Left colon (tissue), 2 donors: ENCODE measurements at regions of chr1 and their contacts with region 1.

Region 1: DNA sequence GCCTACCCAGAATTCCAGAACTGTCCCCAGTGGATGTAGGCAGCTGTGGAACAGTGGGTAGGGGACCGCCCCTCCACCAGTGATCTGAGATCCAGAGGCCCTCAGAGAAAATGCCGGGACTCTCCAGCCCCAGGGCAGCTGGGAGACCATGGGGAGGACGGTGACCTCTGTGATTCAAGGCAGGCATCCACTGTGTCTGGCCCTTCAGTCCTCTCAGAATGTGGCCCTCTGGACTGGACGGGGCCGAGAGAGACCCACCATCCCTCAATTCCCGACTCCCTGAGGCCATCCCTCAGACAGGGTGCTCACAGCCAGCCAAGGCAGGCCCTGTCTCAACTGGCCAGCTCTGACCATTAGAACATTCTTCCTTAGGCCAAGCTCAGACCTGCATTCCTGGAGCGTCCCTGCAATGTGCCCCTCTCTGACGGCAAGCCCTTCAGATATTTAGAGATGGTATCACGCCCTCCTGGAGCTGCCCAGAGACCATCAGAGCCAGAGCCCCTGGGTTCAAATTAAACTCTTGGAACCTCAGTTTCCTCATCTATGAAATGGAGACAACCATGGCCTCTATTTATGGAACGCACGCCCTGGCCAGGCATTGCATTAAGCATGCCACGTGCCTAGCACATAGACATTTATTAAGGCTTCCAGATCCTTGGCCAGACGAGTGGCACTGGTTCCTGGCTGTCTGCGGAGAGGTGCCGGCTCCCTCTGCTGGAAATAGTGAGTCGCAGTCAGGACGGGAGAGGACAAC is 9.6 kb upstream of the EPS8L3 start:
- DNase-seq: peak; percentile 80 to 85
- ATAC-seq: peak; percentile 84

Region 2: GRCh38 chr1:109643385-109644230 is 129.7 kb before region 1 on chr1:
- intact Hi-C with region 1: loop called (anchors 5 to 10 kb)
- DNase-seq: peak; percentile 78 to 94
- ATAC-seq: peak; percentile 88

Region 3: GRCh38 chr1:109984456-109985275 is 211.3 kb after region 1 on chr1 and contains the start of gene AHCYL1:
- intact Hi-C with region 1: loop called (anchors 2 to 5 kb)
- DNase-seq: peak; percentile 99 to 100
- ATAC-seq: peak; percentile 95
- total RNA-seq, gene AHCYL1: 90.7 to 95.1 TPM